CD14-positive monocyte (primary cell): ENCODE measurements at regions of chr16 and their contacts with region 1.

Region 1: GRCh38 chr16:4506450-4506849 is 30.3 kb downstream of the HMOX2 start:
- DNase-seq: peak; percentile 76 to 84 (median 83)
- H3K4me3 ChIP-seq: no peak overlapping the region
- H3K4me3 Mint-ChIP-seq: no peak overlapping the region
- H3K27ac ChIP-seq: peak overlapping the region in 1 of 2 donors; percentile 84
- H3K27ac Mint-ChIP-seq: peak overlapping the region in 6 of 7 donors; percentile 80 to 96 (median 90)
- H3K4me1 ChIP-seq: peaks cover 32 to 38% of the 10 kb centered on the region in 2 donors
- H3K4me1 Mint-ChIP-seq: peaks cover 40% of the 10 kb centered on the region
- H3K27me3 ChIP-seq: no peaks in the 10 kb centered on the region
- H3K27me3 Mint-ChIP-seq: peaks cover 0 to 2% (median 2%) of the 10 kb centered on the region in 3 donors
- CTCF ChIP-seq: peak; percentile 91

Region 2: DNA sequence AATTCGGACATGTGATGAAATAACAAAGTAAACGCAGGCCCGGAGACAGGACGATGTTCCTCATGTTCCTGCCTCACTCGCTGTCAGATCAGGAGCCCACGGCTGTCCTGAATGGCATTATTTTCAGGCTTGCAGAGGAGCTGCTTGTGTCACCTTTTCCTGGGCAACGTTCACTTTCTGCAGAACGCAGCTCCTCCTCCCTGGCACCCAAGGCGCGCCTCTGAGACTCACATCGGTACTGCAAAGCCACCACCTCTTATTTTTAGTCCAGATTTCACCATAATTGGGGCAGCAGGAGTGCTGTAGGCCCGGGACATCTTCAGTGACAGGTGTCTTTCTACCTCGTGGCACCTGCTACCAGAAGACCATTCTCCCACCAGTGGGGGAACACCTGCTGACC is 41.7 kb after region 1 on chr16:
- intact Hi-C with region 1: loop called (anchors 1 to 2 kb)
- DNase-seq: no peak
- H3K4me3 ChIP-seq: no peak overlapping the region
- H3K4me3 Mint-ChIP-seq: no peak overlapping the region
- H3K27ac ChIP-seq: no peak overlapping the region
- H3K27ac Mint-ChIP-seq: peak overlapping the region in 4 of 7 donors; percentile 55 to 73 (median 64)
- H3K4me1 ChIP-seq: peaks cover 4 to 6% of the 10 kb centered on the region in 2 donors
- H3K4me1 Mint-ChIP-seq: peaks cover 4% of the 10 kb centered on the region
- H3K27me3 ChIP-seq: no peaks in the 10 kb centered on the region
- H3K27me3 Mint-ChIP-seq: peaks cover 0 to 5% (median 4%) of the 10 kb centered on the region in 3 donors
- CTCF ChIP-seq: no peak

Region 3: DNA sequence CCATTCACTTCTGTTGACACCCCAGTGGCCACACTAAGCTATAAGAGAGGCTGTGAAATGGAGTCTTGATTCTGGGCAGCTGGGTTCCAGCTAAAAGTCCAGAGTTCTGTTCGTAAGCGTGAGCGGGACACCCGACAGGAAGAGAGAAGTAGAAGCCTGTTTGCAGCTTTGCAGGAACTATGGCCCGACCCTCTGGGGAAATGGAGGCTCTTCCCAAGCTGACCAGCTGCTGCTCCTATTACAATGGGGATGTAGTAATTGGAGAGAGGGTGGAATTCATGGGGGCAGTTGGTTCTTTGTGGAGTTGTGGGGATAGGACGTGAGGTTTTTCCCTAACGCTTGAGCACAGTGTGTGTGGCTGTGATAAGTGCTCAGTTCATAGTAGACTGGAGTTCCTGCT is 79.8 kb after region 1 on chr16:
- intact Hi-C with region 1: loop called in 1 of 2 experiments (anchors 5 kb)
- DNase-seq: no peak
- H3K4me3 ChIP-seq: no peak overlapping the region
- H3K4me3 Mint-ChIP-seq: no peak overlapping the region
- H3K27ac ChIP-seq: no peak overlapping the region
- H3K27ac Mint-ChIP-seq: no peak overlapping the region
- H3K4me1 ChIP-seq: no peaks in the 10 kb centered on the region
- H3K4me1 Mint-ChIP-seq: peaks cover 3% of the 10 kb centered on the region
- H3K27me3 ChIP-seq: peaks cover 0 to 9% of the 10 kb centered on the region in 2 donors
- H3K27me3 Mint-ChIP-seq: peaks cover 9 to 21% (median 16%) of the 10 kb centered on the region in 3 donors
- CTCF ChIP-seq: no peak